GM12878 (cell line): ENCODE measurements at regions of chr10 and their contacts with region 1.

Region 1: GRCh38 chr10:95755511-95756004 is 405 bp upstream of the ENTPD1 start:
- DNase-seq: peak; percentile 90
- ATAC-seq: peak; percentile 48
- H3K4me3 ChIP-seq: peak overlapping the region; percentile 94
- H3K27ac ChIP-seq: peak overlapping the region; percentile 96
- H3K4me1 ChIP-seq: peaks cover 15% of the 10 kb centered on the region; the same call in 1 of the 2 replicates
- H3K27me3 ChIP-seq: no peaks in the 10 kb centered on the region
- CTCF ChIP-seq: no peak; a peak in 1 of 6 replicates
- EP300 ChIP-seq: peak in 1 of 2 experiments; percentile 56; a peak in 1 of 4 replicates
- POLR2A ChIP-seq: peak; percentile 23; the same call in 1 of the 2 replicates
- RAD21 ChIP-seq: no peak

Region 2: DNA sequence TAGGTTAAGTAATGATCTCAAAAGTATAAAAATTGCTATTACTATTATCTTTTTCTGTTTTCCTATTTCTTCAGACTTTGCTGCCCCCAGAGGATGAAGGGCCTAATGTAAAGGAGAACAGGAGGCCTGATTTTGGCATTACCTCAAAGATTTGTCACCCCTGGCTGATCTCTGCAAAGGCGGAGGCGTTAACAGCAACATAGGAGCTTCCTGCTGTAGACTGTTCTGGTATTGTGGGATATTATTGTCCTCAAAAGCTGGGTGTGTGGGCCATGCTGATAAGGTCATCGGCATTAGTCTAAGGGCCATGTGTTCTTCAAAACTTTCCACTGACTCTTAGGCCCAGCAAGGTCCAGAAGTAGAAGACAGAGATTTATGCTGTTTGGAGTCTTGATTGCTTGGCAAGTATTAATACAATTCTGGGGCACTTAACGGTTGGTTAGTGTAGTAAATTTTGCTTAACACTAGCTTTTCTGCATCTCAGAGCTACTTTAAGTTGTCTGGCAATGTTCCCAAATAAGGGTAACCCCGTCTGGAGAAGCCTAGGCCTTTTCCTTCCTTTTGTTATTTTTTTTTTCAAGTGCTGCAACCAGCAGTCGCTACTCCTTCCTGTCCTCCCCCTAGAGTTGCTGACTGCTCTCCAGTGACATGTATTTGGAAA is 13.6 kb before region 1 on chr10:
- CTCF ChIA-PET with region 1: interaction called, 4 read pairs
- POLR2A ChIA-PET with region 1: interaction called, 6 read pairs
- RAD21 ChIA-PET with region 1: interaction called, 5 read pairs
- SMC1A ChIA-PET with region 1: interaction called, 20 read pairs
- in situ Hi-C with region 1: no loop called
- intact Hi-C with region 1: no loop called
- DNase-seq: peak; percentile 60
- ATAC-seq: peak; percentile 60
- H3K4me3 ChIP-seq: peak overlapping the region; percentile 27
- H3K27ac ChIP-seq: peak overlapping the region; percentile 85
- H3K4me1 ChIP-seq: peaks cover 9% of the 10 kb centered on the region
- H3K27me3 ChIP-seq: no peaks in the 10 kb centered on the region
- CTCF ChIP-seq: peak in 2 of 3 experiments; percentile 15 to 45; a peak in 3 of 6 replicates
- EP300 ChIP-seq: no peak
- POLR2A ChIP-seq: peak; percentile 43; the same call in 1 of the 2 replicates
- RAD21 ChIP-seq: peak; percentile 71

Region 3: GRCh38 chr10:95783741-95784140 is 28.2 kb after region 1 on chr10:
- CTCF ChIA-PET with region 1: interaction called, 112 read pairs
- POLR2A ChIA-PET with region 1: interaction called, 265 read pairs
- RAD21 ChIA-PET with region 1: interaction called, 270 read pairs
- SMC1A ChIA-PET with region 1: interaction called, 547 read pairs
- in situ Hi-C with region 1: no loop called
- intact Hi-C with region 1: loop called (anchors 1 kb)
- DNase-seq: peak; percentile 94
- ATAC-seq: peak; percentile 50
- H3K4me3 ChIP-seq: no peak overlapping the region
- H3K27ac ChIP-seq: peak overlapping the region; percentile 99
- H3K4me1 ChIP-seq: peaks cover 79% of the 10 kb centered on the region
- H3K27me3 ChIP-seq: no peaks in the 10 kb centered on the region
- CTCF ChIP-seq: no peak
- EP300 ChIP-seq: peak; percentile 93 to 99
- POLR2A ChIP-seq: no peak
- RAD21 ChIP-seq: peak; percentile 8; the same call in 1 of the 2 replicates

Region 4: GRCh38 chr10:95798096-95798855 is 42.7 kb after region 1 on chr10:
- CTCF ChIA-PET with region 1: interaction called, 3 read pairs
- POLR2A ChIA-PET with region 1: interaction called, 107 read pairs
- RAD21 ChIA-PET with region 1: interaction called, 78 read pairs
- SMC1A ChIA-PET with region 1: interaction called, 547 read pairs
- in situ Hi-C with region 1: no loop called
- intact Hi-C with region 1: loop called (anchors 1 kb)
- DNase-seq: no peak
- ATAC-seq: no peak
- H3K4me3 ChIP-seq: no peak overlapping the region
- H3K27ac ChIP-seq: no peak overlapping the region
- H3K4me1 ChIP-seq: peaks cover 19% of the 10 kb centered on the region
- H3K27me3 ChIP-seq: no peaks in the 10 kb centered on the region
- CTCF ChIP-seq: no peak
- EP300 ChIP-seq: no peak
- POLR2A ChIP-seq: no peak
- RAD21 ChIP-seq: no peak

Region 5: GRCh38 chr10:95832216-95833041 is 76.9 kb after region 1 on chr10:
- CTCF ChIA-PET with region 1: interaction called, 187 read pairs
- POLR2A ChIA-PET with region 1: interaction called, 313 read pairs
- RAD21 ChIA-PET with region 1: interaction called, 374 read pairs
- SMC1A ChIA-PET with region 1: interaction called, 413 read pairs
- in situ Hi-C with region 1: loop called (anchors 10 kb)
- intact Hi-C with region 1: loop called (anchors 1 kb)
- DNase-seq: peak; percentile 99
- ATAC-seq: peak; percentile 87
- H3K4me3 ChIP-seq: no peak overlapping the region
- H3K27ac ChIP-seq: peak overlapping the region; percentile 98
- H3K4me1 ChIP-seq: peaks cover 71% of the 10 kb centered on the region
- H3K27me3 ChIP-seq: no peaks in the 10 kb centered on the region
- CTCF ChIP-seq: no peak
- EP300 ChIP-seq: peak; percentile 99 to 100
- POLR2A ChIP-seq: peak; percentile 37
- RAD21 ChIP-seq: peak; percentile 36; the same call in 1 of the 2 replicates

Region 6: GRCh38 chr10:95864906-95865813 is 109.6 kb after region 1 on chr10:
- CTCF ChIA-PET with region 1: no interaction called
- POLR2A ChIA-PET with region 1: no interaction called
- RAD21 ChIA-PET with region 1: no interaction called
- SMC1A ChIA-PET with region 1: interaction called, 13 read pairs
- in situ Hi-C with region 1: no loop called
- intact Hi-C with region 1: no loop called
- DNase-seq: peak; percentile 42
- ATAC-seq: peak; percentile 91
- H3K4me3 ChIP-seq: no peak overlapping the region
- H3K27ac ChIP-seq: peak overlapping the region; percentile 40; the same call in 1 of the 2 replicates
- H3K4me1 ChIP-seq: peaks cover 9% of the 10 kb centered on the region; the same call in 1 of the 2 replicates
- H3K27me3 ChIP-seq: no peaks in the 10 kb centered on the region
- CTCF ChIP-seq: peak; percentile 66 to 77 (median 70); a peak in 5 of 6 replicates
- EP300 ChIP-seq: no peak
- POLR2A ChIP-seq: no peak
- RAD21 ChIP-seq: peak; percentile 80

Region 7: DNA sequence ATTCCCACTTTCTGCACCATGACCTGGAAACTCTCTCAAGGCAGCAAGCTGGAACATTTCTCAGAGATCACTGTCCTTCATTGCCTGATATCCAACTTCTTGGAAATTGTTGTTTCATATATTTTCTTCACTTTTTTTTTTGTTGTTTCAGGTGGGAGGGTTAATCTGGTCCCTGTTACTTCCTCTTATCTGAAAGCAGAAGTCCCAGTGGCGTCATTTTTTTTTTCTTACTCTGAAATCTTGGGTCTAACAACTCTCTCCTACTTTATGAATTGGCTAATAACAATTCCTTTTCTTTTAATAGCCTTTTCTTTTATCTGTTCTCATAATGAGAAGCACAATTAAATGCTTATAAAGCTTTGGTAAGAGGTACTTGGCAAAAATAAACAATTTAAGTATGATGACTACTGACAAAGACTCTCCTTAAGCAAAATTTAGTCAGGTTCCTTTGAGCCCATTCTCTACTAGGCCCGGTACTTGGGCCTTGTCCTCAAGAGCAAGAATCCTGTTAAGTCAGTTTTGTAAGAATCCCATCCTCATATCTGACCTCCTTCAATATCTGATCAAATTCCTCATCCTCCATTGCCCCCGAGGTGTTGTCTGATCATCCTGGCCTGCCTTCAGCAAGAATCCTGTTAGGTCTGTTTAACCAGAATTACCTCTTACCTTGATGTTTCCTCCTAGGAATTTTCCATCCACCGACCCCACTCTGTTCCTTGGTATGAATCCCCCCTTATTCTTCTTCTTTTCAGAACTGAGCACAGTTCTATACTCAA is 140.7 kb after region 1 on chr10:
- CTCF ChIA-PET with region 1: no interaction called
- POLR2A ChIA-PET with region 1: no interaction called
- RAD21 ChIA-PET with region 1: no interaction called
- SMC1A ChIA-PET with region 1: no interaction called
- in situ Hi-C with region 1: no loop called
- intact Hi-C with region 1: no loop called
- DNase-seq: no peak
- ATAC-seq: no peak
- H3K4me3 ChIP-seq: no peak overlapping the region
- H3K27ac ChIP-seq: no peak overlapping the region
- H3K4me1 ChIP-seq: no peaks in the 10 kb centered on the region
- H3K27me3 ChIP-seq: no peaks in the 10 kb centered on the region
- CTCF ChIP-seq: no peak
- EP300 ChIP-seq: no peak
- POLR2A ChIP-seq: no peak
- RAD21 ChIP-seq: no peak